HepG2 (cell line): ENCODE measurements at regions of chr11 and their contacts with region 1.

Region 1: GRCh38 chr11:66222358-66223149 is 45.9 kb upstream of the RAB1B start:
- DNase-seq: peak; percentile 93
- ATAC-seq: peak; percentile 93
- H3K4me3 ChIP-seq: no peak overlapping the region
- H3K27ac ChIP-seq: no peak overlapping the region
- H3K4me1 ChIP-seq: peaks cover 5% of the 10 kb centered on the region; the same call in 1 of the 2 replicates
- H3K27me3 ChIP-seq: no peaks in the 10 kb centered on the region
- CTCF ChIP-seq: peak; percentile 99
- EP300 ChIP-seq: no peak
- POLR2A ChIP-seq: no peak
- RAD21 ChIP-seq: peak; percentile 96

Region 2: DNA sequence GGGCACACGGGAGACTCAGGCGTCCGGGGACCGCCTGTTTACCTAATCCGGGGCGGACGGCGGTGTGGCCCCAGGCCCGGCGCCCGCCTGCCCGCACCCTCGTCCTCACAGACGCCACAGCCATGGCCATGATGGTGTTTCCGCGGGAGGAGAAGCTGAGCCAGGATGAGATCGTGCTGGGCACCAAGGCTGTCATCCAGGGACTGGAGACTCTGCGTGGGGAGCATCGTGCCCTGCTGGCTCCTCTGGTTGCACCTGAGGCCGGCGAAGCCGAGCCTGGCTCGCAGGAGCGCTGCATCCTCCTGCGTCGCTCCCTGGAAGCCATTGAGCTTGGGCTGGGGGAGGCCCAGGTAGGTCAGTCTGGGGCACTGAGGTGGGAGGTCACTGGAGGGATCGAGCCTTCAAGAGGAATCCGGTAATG is 35.9 kb after region 1 on chr11:
- CTCF ChIA-PET with region 1: no interaction called
- POLR2A ChIA-PET with region 1: no interaction called
- in situ Hi-C with region 1: no loop called
- intact Hi-C with region 1: loop called (anchors 1 kb)
- DNase-seq: no peak
- ATAC-seq: peak; percentile 15
- H3K4me3 ChIP-seq: peak overlapping the region; percentile 81 to 97 (median 85)
- H3K27ac ChIP-seq: no peak overlapping the region
- H3K4me1 ChIP-seq: peaks cover 18% of the 10 kb centered on the region
- H3K27me3 ChIP-seq: no peaks in the 10 kb centered on the region; a peak in 1 of 5 replicates
- CTCF ChIP-seq: no peak
- EP300 ChIP-seq: no peak
- POLR2A ChIP-seq: no peak
- RAD21 ChIP-seq: no peak

Region 3: GRCh38 chr11:66282468-66283386 is 60.2 kb after region 1 on chr11:
- CTCF ChIA-PET with region 1: interaction called, 26 read pairs
- POLR2A ChIA-PET with region 1: no interaction called
- in situ Hi-C with region 1: no loop called
- intact Hi-C with region 1: no loop called
- DNase-seq: peak; percentile 93
- ATAC-seq: peak; percentile 75
- H3K4me3 ChIP-seq: no peak overlapping the region
- H3K27ac ChIP-seq: no peak overlapping the region
- H3K4me1 ChIP-seq: peaks cover 60% of the 10 kb centered on the region
- H3K27me3 ChIP-seq: peaks cover 3 to 9% of the 10 kb centered on the region in 2 experiments; a peak in 3 of 5 replicates
- CTCF ChIP-seq: peak; percentile 98
- EP300 ChIP-seq: no peak
- POLR2A ChIP-seq: no peak
- RAD21 ChIP-seq: peak; percentile 90